Activated CD4-positive, alpha-beta T cell treated with anti-CD3 and anti-CD28 coated beads for 36 hours (primary cell): ENCODE measurements at regions of chr10 and their contacts with region 1.

Region 1: DNA sequence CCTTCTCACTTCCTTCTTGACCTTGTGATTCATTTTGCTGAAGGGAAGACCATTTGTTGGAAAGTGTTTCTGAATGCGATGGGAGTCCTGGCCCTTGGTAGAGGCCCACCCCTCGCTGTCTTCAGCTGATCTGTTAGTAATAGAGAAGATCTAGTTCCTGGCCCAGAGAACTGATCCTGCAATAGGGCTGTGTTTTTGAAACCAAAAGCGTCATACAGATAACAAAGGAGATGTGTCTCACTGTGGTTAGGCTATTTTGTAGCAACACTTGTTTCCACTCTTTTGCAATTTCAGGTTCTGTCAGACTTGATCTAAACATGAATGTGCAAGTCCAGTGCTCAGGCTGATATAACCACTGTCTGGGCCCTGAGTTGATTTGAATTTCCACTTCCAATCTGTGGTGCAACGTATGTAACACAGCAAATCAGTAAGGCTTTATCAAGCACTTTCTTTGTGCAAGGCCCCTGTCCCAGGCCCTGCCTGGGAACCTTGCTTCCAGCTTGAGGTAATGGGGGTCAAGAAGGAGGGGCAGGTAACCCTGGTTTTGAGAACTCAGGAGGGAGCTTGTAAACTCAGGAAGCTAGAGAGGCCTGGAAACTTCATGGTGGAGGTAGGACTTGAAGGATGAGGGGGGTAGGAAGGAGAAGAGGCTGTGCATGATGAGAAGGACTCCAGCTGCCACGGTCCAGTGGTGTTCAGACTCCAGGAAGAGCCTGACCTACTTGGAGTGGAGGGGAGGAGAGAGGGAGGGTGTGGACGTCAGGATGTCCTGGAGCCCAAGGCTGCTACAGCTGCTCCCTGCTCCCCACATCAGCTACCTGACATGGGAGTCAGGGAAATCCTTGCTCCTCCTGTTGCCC is 42.2 kb upstream of the SRGN start:
- DNase-seq: peak; percentile 62
- ATAC-seq: peak; percentile 80
- H3K4me3 Mint-ChIP-seq: peak overlapping the region; percentile 43
- H3K27ac Mint-ChIP-seq: peak overlapping the region; percentile 96
- H3K4me1 Mint-ChIP-seq: peaks cover 59% of the 10 kb centered on the region
- H3K27me3 Mint-ChIP-seq: no peaks in the 10 kb centered on the region

Region 2: DNA sequence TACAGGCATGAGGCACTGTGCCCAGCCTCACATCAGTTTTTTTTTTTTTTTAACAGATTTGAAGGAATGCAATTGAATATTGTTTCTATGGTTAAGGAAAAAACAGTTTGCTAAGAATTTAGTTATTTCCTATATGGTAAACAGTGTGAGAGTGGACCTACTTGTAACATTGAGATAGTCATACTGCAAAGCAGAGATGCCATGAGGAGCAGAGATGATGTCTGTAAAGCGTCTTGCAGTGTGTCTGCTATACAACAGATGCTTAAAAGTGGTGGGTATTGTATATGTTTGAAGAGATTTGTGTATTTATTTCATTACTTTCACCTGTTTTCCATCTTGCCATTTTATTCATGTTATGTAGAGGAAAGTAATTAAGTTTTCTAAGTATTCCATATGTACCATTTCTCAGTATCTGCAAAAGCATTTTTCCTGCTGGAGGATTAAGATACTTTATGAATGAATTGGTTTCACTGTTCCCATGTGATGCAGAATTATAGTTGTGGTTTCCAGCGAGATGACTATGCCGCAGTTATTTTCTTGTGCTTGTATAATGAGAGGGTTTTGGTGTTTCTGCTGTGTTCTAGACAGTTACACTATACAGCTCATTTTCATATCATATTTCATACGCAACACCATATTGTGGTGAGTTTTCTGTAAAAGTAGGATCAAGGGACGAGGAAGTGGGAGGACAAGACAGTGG is 458.9 kb before region 1 on chr10:
- CTCF ChIA-PET with region 1: no interaction called
- POLR2A ChIA-PET with region 1: no interaction called
- intact Hi-C with region 1: no loop called
- DNase-seq: no peak
- ATAC-seq: peak; percentile 33
- H3K4me3 Mint-ChIP-seq: no peak overlapping the region
- H3K27ac Mint-ChIP-seq: no peak overlapping the region
- H3K4me1 Mint-ChIP-seq: peaks cover 7% of the 10 kb centered on the region
- H3K27me3 Mint-ChIP-seq: no peaks in the 10 kb centered on the region

Region 3: GRCh38 chr10:68796605-68797004 is 249.1 kb before region 1 on chr10:
- CTCF ChIA-PET with region 1: no interaction called
- POLR2A ChIA-PET with region 1: no interaction called
- intact Hi-C with region 1: no loop called
- DNase-seq: no peak
- ATAC-seq: no peak
- H3K4me3 Mint-ChIP-seq: no peak overlapping the region
- H3K27ac Mint-ChIP-seq: no peak overlapping the region
- H3K4me1 Mint-ChIP-seq: no peaks in the 10 kb centered on the region
- H3K27me3 Mint-ChIP-seq: no peaks in the 10 kb centered on the region

Region 4: GRCh38 chr10:68997211-68997610 is 48.5 kb before region 1 on chr10:
- CTCF ChIA-PET with region 1: interaction called, 6 read pairs
- POLR2A ChIA-PET with region 1: no interaction called
- intact Hi-C with region 1: loop called in 1 of 2 experiments (anchors 2 kb)
- DNase-seq: no peak
- ATAC-seq: peak; percentile 10
- H3K4me3 Mint-ChIP-seq: peak overlapping the region; percentile 13
- H3K27ac Mint-ChIP-seq: peak overlapping the region; percentile 96
- H3K4me1 Mint-ChIP-seq: peaks cover 45% of the 10 kb centered on the region
- H3K27me3 Mint-ChIP-seq: no peaks in the 10 kb centered on the region

Region 5: DNA sequence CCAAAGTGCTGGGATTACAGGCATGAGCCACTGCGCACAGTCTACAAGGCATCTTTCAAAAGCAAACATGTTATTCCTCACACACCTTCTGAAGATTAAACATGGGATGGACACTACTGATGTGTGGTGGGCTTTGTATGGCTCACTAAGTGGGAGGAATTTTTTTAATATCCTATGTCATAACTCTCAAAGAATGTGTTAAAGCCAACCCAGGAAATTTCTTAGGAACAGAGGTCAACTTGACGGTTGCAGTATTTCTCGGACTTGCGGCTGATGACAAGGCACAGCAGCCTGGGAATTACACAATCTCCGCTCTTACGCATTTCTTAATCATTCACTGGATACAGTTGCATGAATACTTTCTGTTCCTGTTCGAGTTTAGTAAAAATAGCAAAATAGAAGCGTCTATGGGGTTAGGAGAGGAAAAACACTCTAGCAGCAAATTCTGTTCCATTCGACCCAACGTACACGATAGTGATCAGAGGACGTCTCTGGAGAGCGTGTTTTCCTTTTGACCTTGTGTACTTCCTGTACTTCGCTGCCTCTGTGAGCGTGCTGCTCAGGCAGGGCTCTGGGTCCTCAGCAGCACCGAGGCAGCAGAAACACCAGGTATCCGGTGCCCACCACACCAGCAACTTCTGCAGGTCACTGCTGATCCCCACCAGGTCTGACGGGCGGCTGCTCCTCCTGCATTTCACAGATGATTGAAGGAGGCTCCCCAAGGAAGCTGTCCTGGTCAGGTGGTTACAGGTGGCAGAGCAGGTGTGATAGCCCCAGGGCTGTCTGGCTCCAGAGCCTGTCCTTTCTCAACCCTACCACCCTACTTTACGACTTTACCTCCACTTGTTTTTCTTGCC is 15.9 kb after region 1 on chr10:
- CTCF ChIA-PET with region 1: interaction called, 35 read pairs
- POLR2A ChIA-PET with region 1: interaction called, 13 read pairs
- intact Hi-C with region 1: loop called (anchors 1 kb)
- DNase-seq: peak; percentile 51
- ATAC-seq: peak; percentile 34
- H3K4me3 Mint-ChIP-seq: peak overlapping the region; percentile 67
- H3K27ac Mint-ChIP-seq: peak overlapping the region; percentile 89
- H3K4me1 Mint-ChIP-seq: peaks cover 60% of the 10 kb centered on the region
- H3K27me3 Mint-ChIP-seq: peaks cover 2% of the 10 kb centered on the region

Region 6: GRCh38 chr10:69073026-69073425 is 27.4 kb after region 1 on chr10:
- CTCF ChIA-PET with region 1: no interaction called
- POLR2A ChIA-PET with region 1: no interaction called
- intact Hi-C with region 1: no loop called
- DNase-seq: no peak
- ATAC-seq: no peak
- H3K4me3 Mint-ChIP-seq: no peak overlapping the region
- H3K27ac Mint-ChIP-seq: no peak overlapping the region
- H3K4me1 Mint-ChIP-seq: peaks cover 7% of the 10 kb centered on the region
- H3K27me3 Mint-ChIP-seq: no peaks in the 10 kb centered on the region

Region 7: DNA sequence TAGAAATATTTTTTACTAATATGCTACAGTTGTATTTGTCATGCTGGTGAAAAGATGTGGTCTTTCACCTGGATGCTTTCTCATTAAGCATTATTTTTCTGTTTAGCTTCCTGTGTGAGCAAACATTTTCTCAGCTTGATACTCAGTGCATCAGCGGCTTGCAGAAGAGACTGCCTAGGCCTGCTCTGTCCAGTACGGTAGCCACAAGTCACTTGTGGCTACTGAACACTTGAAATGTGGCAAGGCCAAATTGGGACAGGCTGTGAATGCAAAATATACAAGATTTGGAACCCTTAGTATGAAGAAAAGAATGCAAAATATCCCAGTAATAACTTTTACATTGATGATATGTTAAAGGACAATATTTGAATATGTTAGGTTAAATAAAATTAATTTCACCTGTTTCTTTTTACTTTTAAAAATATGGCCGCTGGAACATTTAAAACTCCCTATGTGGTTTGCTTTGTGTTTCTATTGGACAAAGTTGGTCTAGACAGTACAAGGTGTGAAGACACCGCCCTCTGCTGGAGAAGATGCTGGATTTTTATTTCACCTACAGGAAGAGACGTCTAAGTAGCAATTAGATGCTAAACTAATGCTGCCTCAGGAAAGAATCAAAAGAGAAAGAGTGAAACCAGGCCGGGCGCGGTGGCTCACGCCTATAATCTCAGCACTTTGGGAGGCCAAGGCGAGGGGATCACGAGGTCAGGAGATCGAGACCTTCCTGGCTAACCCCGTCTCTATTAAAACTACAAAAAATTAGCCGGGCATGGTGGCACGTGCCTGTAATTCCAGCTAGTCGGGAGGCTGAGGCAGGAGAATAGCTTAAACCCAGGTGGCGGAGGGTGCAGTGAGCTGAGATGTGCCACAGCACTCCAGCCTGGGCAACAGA is 47.5 kb after region 1 on chr10:
- CTCF ChIA-PET with region 1: interaction called, 22 read pairs
- POLR2A ChIA-PET with region 1: interaction called, 25 read pairs
- intact Hi-C with region 1: no loop called
- DNase-seq: peak; percentile 90
- ATAC-seq: peak; percentile 22
- H3K4me3 Mint-ChIP-seq: peak overlapping the region; percentile 30
- H3K27ac Mint-ChIP-seq: peak overlapping the region; percentile 81
- H3K4me1 Mint-ChIP-seq: peaks cover 60% of the 10 kb centered on the region
- H3K27me3 Mint-ChIP-seq: no peaks in the 10 kb centered on the region

Region 8: GRCh38 chr10:69222157-69223027 is 176.7 kb after region 1 on chr10:
- CTCF ChIA-PET with region 1: no interaction called
- POLR2A ChIA-PET with region 1: no interaction called
- intact Hi-C with region 1: loop called in 1 of 2 experiments (anchors 1 kb)
- DNase-seq: peak; percentile 90
- ATAC-seq: peak; percentile 92
- H3K4me3 Mint-ChIP-seq: peak overlapping the region; percentile 52
- H3K27ac Mint-ChIP-seq: peak overlapping the region; percentile 91
- H3K4me1 Mint-ChIP-seq: peaks cover 32% of the 10 kb centered on the region
- H3K27me3 Mint-ChIP-seq: no peaks in the 10 kb centered on the region